PC-9 (cell line): ENCODE measurements at regions of chr1 and their contacts with region 1.

Region 1: GRCh38 chr1:198135376-198135775 is 21.4 kb upstream of the NEK7 start:
- DNase-seq: peak; percentile 43 to 77
- H3K4me3 ChIP-seq: no peak overlapping the region
- H3K27ac ChIP-seq: no peak overlapping the region
- H3K4me1 ChIP-seq: peaks cover 15% of the 10 kb centered on the region
- H3K27me3 ChIP-seq: no peaks in the 10 kb centered on the region
- CTCF ChIP-seq: no peak

Region 2: GRCh38 chr1:197811769-197812168 is 323.6 kb before region 1 on chr1:
- CTCF ChIA-PET with region 1: no interaction called
- POLR2A ChIA-PET with region 1: no interaction called
- intact Hi-C with region 1: no loop called
- DNase-seq: no peak
- H3K4me3 ChIP-seq: no peak overlapping the region
- H3K27ac ChIP-seq: no peak overlapping the region
- H3K4me1 ChIP-seq: no peaks in the 10 kb centered on the region
- H3K27me3 ChIP-seq: no peaks in the 10 kb centered on the region
- CTCF ChIP-seq: no peak

Region 3: GRCh38 chr1:198088360-198089071 is 46.9 kb before region 1 on chr1:
- CTCF ChIA-PET with region 1: no interaction called
- POLR2A ChIA-PET with region 1: no interaction called
- intact Hi-C with region 1: loop called (anchors 5 kb)
- DNase-seq: peak in 1 of 2 experiments; percentile 16
- H3K4me3 ChIP-seq: no peak overlapping the region
- H3K27ac ChIP-seq: no peak overlapping the region
- H3K4me1 ChIP-seq: no peaks in the 10 kb centered on the region
- H3K27me3 ChIP-seq: no peaks in the 10 kb centered on the region
- CTCF ChIP-seq: peak; percentile 75

Region 4: GRCh38 chr1:198416296-198416695 is 280.9 kb after region 1 on chr1:
- CTCF ChIA-PET with region 1: no interaction called
- POLR2A ChIA-PET with region 1: no interaction called
- intact Hi-C with region 1: no loop called
- DNase-seq: no peak
- H3K4me3 ChIP-seq: no peak overlapping the region
- H3K27ac ChIP-seq: no peak overlapping the region
- H3K4me1 ChIP-seq: no peaks in the 10 kb centered on the region
- H3K27me3 ChIP-seq: no peaks in the 10 kb centered on the region
- CTCF ChIP-seq: no peak